Ovary (tissue), 10 donors: ENCODE measurements at regions of chr6 and their contacts with region 1.

Region 1: DNA sequence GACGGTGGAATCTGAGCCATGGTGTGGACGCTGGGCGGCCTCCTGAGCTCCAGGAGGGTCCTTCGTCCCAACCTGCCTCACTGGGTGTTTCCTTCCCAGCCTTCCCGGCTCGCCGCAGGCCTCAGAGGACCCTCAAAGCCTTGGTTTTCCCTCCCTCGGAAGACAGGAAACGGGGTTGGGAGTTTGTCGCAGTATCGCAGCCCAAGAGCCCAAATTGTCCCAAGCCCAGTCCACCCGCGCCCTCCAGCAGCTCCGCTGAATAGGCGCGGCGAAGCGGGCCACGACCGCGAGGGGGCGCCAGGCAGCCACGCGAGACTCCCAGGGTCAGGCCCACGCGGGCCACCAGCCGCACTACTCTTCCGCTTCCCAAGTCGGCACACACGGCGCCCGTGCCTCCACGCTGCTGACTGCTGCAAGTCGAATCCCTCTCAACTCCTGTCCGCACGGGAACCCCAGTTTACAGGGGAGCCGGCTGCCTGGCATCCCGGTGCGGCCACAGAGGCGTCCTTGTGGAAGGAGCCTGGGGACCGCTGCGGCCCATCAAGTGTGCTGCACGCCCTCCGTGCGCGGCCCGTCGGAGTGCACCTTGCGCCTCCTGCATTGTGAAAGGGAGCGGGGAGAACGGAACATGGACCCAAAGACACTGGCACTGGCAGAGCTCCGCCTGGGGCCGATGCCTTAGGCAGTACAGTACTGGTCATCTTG is 40.4 kb upstream of the HMGA1 start:
- DNase-seq: peak; percentile 80 to 92 (median 87)
- H3K4me3 ChIP-seq: peak overlapping the region; percentile 40
- H3K27ac ChIP-seq: no peak overlapping the region
- H3K4me1 ChIP-seq: peaks cover 4% of the 10 kb centered on the region
- H3K27me3 ChIP-seq: no peaks in the 10 kb centered on the region
- CTCF ChIP-seq: peak; percentile 96 to 97 (median 97)
- EP300 ChIP-seq: no peak
- POLR2A ChIP-seq: peak; percentile 14

Region 2: GRCh38 chr6:34248727-34249551 is 52.7 kb after region 1 on chr6 and contains the start of gene SMIM29:
- intact Hi-C with region 1: loop called in 2 of 4 experiments (anchors 2 kb)
- DNase-seq: peak; percentile 96 to 98 (median 97)
- H3K4me3 ChIP-seq: peak within 1 kb of the TSS; percentile 81
- H3K27ac ChIP-seq: peak within 1 kb of the TSS; percentile 61 to 64
- H3K4me1 ChIP-seq: peaks cover 4% of the 10 kb centered on the region
- H3K27me3 ChIP-seq: no peaks in the 10 kb centered on the region
- CTCF ChIP-seq: peak; percentile 87 to 98 (median 96)
- EP300 ChIP-seq: no peak
- POLR2A ChIP-seq: peak; percentile 54
- total RNA-seq, gene SMIM29: 14.7 to 26.6 (median 17.8) TPM

Region 3: DNA sequence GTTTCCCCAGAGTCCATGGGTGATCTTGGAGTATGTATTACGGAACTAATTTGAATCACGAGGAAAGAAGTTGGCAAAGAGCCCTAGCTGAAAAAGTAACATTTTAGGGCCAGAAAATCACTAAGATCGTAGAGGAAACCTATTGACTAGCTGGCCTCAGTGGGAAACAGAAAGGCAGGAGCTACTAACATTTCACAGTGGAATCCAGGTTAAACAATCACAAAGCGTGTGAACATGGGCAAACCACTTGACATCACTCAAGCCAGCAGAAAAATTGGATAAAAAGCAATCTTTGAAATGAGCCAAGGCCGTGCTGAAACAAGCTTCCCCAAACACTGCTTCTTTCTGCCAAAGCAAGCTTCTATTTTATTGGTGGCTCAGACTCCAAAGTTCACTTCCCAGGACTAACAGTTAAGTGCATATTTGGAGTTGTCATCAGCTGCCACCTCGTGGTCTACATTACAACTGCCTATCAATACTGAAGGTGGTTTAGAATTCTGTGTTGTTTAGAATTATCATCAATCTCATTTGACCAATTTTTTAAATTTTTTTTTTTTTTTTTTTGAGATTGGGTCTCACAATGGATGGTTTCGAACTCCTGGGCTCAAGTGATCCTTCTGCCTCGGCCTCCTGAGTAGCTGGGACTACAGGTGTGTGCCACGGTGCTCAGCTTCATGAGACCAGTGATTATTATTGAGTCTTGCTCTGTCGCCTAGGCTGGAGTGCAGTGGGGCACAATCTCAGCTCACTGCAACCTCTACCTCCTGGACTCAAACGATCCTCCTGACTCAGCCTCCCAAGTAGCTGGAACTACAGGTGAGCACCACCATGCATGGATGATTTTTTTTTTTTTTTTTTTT is 219.0 kb after region 1 on chr6:
- intact Hi-C with region 1: loop called in 3 of 4 experiments (anchors 2 to 5 kb)
- DNase-seq: peak in 4 of 5 donors; percentile 43 to 73 (median 54)
- H3K4me3 ChIP-seq: no peak overlapping the region
- H3K27ac ChIP-seq: peak overlapping the region; percentile 45 to 53
- H3K4me1 ChIP-seq: peaks cover 6% of the 10 kb centered on the region
- H3K27me3 ChIP-seq: no peaks in the 10 kb centered on the region
- CTCF ChIP-seq: peak; percentile 35 to 87 (median 83)
- EP300 ChIP-seq: no peak
- POLR2A ChIP-seq: no peak

Region 4: GRCh38 chr6:34514593-34515472 is 318.6 kb after region 1 on chr6:
- intact Hi-C with region 1: loop called in 1 of 4 experiments (anchors 5 kb)
- DNase-seq: peak; percentile 54 to 80 (median 64)
- H3K4me3 ChIP-seq: no peak overlapping the region
- H3K27ac ChIP-seq: no peak overlapping the region
- H3K4me1 ChIP-seq: peaks cover 5% of the 10 kb centered on the region
- H3K27me3 ChIP-seq: no peaks in the 10 kb centered on the region
- CTCF ChIP-seq: no peak
- EP300 ChIP-seq: no peak
- POLR2A ChIP-seq: no peak

Region 5: DNA sequence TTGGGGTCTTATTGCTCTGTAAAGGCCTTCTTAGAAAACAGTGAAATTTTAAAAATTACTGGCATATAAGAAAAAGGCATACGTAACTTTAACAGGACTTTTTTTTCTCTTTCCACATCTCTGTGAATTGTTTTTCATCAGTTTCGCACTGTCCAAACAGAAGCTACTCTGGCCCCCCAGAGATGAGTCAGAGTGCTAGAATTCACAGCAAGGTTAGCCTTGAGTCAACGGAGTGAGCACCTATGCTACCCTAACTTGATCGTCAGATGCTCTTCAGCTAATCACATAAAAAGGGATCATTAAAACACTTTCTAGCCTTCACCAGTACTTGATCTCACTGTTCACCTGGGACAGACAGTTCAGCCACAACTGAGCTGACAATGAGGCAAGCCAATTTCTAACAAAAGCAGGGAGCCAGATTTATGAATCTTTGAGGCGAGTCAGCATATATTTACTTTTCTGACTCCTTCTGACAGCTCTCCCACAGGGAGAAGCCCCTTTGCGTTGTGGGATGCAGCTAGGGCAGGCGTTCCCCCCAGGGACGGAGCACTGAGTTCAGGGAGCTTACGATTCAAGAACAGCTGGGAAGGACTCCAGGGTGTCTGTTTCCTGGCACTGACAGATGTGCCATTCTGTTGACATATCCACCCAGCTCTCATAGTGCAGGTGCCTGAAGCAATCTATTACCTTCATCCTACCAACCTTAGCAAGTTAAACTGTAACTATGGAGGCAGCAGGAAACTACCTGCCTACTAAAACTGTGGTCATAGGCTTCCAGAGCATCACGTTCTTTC is 406.2 kb after region 1 on chr6:
- intact Hi-C with region 1: loop called in 1 of 4 experiments (anchors 10 kb)
- DNase-seq: no peak
- H3K4me3 ChIP-seq: no peak overlapping the region
- H3K27ac ChIP-seq: no peak overlapping the region
- H3K4me1 ChIP-seq: peaks cover 20% of the 10 kb centered on the region
- H3K27me3 ChIP-seq: no peaks in the 10 kb centered on the region
- CTCF ChIP-seq: no peak
- EP300 ChIP-seq: no peak
- POLR2A ChIP-seq: no peak

Region 6: GRCh38 chr6:34610819-34611477 is 414.7 kb after region 1 on chr6:
- intact Hi-C with region 1: loop called in 2 of 4 experiments (anchors 10 kb)
- DNase-seq: no peak
- H3K4me3 ChIP-seq: no peak overlapping the region
- H3K27ac ChIP-seq: no peak overlapping the region
- H3K4me1 ChIP-seq: no peaks in the 10 kb centered on the region
- H3K27me3 ChIP-seq: no peaks in the 10 kb centered on the region
- CTCF ChIP-seq: no peak
- EP300 ChIP-seq: no peak
- POLR2A ChIP-seq: no peak